ENCODE measurements at regions of chr1 and their contacts with region 1.

Region 1: GRCh38 chr1:94463765-94464330 is 45.7 kb downstream of the ABCD3 start:
- H3K4me3 Mint-ChIP-seq: no peak overlapping the region
- H3K27ac Mint-ChIP-seq: no peak overlapping the region
- H3K4me1 Mint-ChIP-seq: peaks cover 22% of the 10 kb centered on the region
- H3K27me3 Mint-ChIP-seq: no peaks in the 10 kb centered on the region

Region 2: GRCh38 chr1:94045465-94046056 is 418.3 kb before region 1 on chr1:
- intact Hi-C with region 1: loop called (anchors 5 kb)
- H3K4me3 Mint-ChIP-seq: peak overlapping the region; percentile 64
- H3K27ac Mint-ChIP-seq: no peak overlapping the region
- H3K4me1 Mint-ChIP-seq: peaks cover 14% of the 10 kb centered on the region
- H3K27me3 Mint-ChIP-seq: peaks cover 41% of the 10 kb centered on the region

Region 3: DNA sequence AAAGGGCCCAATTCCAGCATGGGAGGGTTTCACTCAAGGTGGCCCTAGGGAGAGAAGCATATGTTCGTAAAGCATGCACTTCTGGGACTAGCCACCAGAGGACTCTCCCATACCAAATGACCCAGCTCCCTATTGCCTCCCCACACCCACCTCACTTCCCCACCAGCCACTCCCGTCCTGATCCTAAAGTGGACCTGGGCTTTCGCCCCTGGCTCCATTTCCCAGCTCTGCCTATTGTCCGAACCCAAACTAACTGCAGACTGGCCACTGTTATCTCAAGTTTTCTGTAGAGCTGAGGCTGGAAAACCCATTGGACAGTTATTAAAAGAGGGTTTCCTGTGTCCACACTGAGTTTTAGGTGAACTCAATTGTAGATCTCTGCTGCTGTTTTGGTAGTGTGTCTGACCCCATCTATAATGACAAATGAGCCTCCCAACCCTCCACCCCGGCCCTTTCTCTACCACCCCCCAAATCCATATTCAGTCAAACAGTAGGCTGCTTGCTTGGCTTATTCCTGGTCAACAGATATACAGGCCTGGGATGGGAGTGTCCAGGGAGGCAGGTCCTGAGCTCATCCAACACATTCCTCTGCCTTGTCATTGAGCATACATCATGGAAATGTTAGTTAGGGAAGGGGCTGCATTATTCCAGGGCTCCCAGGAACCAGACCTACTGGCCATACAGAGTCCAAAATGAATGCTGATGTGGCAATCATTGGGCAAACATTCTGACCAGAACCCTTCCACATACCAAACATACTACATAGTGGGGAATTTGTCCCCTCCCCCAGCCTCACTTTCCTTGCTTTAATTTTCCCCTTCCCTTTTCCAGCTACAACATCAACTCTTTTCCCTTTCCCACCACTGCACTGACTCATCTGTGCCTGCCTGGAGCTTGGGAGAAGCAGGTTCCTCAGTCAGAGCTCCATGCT is 402.1 kb before region 1 on chr1:
- intact Hi-C with region 1: loop called (anchors 5 kb)
- H3K4me3 Mint-ChIP-seq: no peak overlapping the region
- H3K27ac Mint-ChIP-seq: no peak overlapping the region
- H3K4me1 Mint-ChIP-seq: peaks cover 9% of the 10 kb centered on the region
- H3K27me3 Mint-ChIP-seq: peaks cover 67% of the 10 kb centered on the region

Region 4: GRCh38 chr1:94345148-94345721 is 118.6 kb before region 1 on chr1:
- intact Hi-C with region 1: loop called (anchors 10 kb)
- H3K4me3 Mint-ChIP-seq: no peak overlapping the region
- H3K27ac Mint-ChIP-seq: no peak overlapping the region
- H3K4me1 Mint-ChIP-seq: peaks cover 20% of the 10 kb centered on the region
- H3K27me3 Mint-ChIP-seq: no peaks in the 10 kb centered on the region

Region 5: DNA sequence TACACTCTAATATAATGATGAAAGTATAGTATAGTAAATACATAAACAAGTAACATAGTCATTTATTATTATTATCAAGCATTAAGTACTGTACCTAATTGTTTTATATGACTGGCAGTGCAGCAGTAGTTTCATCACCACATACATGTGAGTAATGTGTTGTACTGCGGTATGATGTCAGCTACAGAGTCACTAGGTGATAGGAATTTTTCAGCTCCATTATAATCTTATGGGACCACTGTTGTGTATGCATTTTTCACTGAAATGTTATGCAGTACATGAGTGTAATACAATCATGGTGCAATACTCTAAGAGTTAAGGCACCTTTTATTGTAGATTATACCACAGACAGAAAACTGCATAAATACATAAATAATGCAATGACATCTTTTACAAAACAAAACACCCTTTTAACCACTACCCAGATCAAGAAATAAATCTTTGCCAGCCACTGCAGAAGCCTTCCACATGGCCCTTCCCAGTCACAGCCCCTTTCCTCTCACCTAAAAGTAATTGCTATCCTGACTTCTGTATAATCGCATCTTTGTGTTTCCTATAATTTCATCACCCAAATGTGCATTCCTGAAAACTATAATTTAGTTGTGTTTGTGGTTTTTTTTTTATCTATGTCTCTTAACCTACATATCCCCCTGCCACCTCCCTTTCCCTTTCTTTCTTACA is 29.3 kb before region 1 on chr1:
- intact Hi-C with region 1: no loop called
- H3K4me3 Mint-ChIP-seq: no peak overlapping the region
- H3K27ac Mint-ChIP-seq: no peak overlapping the region
- H3K4me1 Mint-ChIP-seq: peaks cover 11% of the 10 kb centered on the region
- H3K27me3 Mint-ChIP-seq: no peaks in the 10 kb centered on the region